ENCODE measurements at regions of chr11 and their contacts with region 1.

Region 1: GRCh38 chr11:88016392-88017170 is 158.7 kb downstream of the RAB38 start:
- DNase-seq: peak; percentile 80
- ATAC-seq: peak; percentile 70
- H3K4me3 Mint-ChIP-seq: no peak overlapping the region
- H3K27ac Mint-ChIP-seq: no peak overlapping the region
- H3K4me1 Mint-ChIP-seq: no peaks in the 10 kb centered on the region
- H3K27me3 Mint-ChIP-seq: no peaks in the 10 kb centered on the region
- CTCF ChIP-seq: peak; percentile 67

Region 2: GRCh38 chr11:87966694-87967093 is 49.9 kb before region 1 on chr11:
- CTCF ChIA-PET with region 1: interaction called, 12 read pairs
- POLR2A ChIA-PET with region 1: no interaction called
- intact Hi-C with region 1: no loop called
- DNase-seq: no peak
- ATAC-seq: no peak
- H3K4me3 Mint-ChIP-seq: no peak overlapping the region
- H3K27ac Mint-ChIP-seq: no peak overlapping the region
- H3K4me1 Mint-ChIP-seq: no peaks in the 10 kb centered on the region
- H3K27me3 Mint-ChIP-seq: peaks cover 2% of the 10 kb centered on the region
- CTCF ChIP-seq: no peak

Region 3: DNA sequence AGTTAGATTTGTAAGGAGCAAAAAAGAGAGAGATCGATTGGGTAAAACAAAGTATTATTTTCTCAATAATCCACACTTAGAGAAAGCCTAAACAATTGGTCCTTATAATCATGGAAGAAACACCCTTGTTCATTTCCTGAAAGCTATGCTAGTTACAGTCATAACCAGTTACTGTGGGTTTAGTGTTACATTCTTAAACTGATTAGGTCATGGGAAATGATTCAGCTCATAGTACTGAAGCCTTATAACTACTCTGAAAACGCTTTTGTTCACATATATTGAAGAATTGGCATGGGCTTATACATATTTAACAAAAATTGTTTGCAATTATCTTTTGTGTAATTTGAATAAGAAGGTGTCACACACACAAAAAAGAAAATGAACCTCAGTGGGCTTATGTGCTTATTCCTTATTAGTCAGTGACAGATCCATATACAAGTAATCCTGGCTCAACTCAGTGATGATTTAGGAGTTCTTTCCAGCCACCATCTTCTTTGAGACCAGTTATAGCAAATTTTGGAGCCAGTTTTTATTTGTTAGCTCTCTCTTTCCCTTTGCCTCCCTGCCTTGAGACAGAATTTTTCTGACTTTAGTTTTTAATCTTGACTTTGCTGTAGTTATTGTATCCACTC is 519.5 kb after region 1 on chr11:
- CTCF ChIA-PET with region 1: interaction called, 55 read pairs
- POLR2A ChIA-PET with region 1: no interaction called
- intact Hi-C with region 1: no loop called
- DNase-seq: no peak
- ATAC-seq: peak; percentile 96
- H3K4me3 Mint-ChIP-seq: no peak overlapping the region
- H3K27ac Mint-ChIP-seq: no peak overlapping the region
- H3K4me1 Mint-ChIP-seq: peaks cover 4% of the 10 kb centered on the region
- H3K27me3 Mint-ChIP-seq: peaks cover 3% of the 10 kb centered on the region
- CTCF ChIP-seq: no peak

Region 4: DNA sequence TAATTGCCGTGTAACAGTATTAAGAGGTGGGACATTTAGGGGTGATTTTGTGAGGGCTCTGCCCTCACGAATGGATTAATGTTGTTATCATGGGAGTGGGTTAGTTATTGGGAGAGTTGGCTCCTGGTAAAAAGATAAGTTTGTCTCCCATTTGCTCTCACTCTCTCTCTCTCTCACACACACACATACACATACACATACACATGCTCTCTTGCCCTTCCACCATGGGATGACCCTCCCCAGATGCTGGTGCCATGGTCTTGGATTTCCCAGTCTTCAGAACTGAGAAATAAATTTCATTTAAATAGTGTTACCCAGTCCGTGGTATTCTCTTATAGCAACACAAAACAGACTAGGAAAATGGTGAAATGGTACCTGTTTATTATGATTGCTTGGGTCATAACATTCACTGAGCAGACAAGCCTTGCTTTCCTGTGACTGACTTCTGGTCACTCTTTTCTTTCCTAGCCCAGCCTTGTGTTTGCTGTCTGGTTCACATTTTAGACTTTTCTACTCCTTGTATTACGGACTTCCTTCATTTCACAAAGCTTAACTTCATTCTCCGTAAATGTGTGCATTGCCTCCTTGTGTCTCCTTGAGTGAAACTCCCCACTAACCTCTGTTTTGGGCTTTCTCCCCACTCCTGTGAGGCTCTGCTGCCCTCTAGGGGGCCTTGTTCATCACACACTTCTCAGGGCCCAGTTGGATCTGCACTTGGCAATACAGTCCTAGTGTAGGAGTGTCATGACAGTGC is 527.5 kb after region 1 on chr11:
- CTCF ChIA-PET with region 1: interaction called, 84 read pairs
- POLR2A ChIA-PET with region 1: no interaction called
- intact Hi-C with region 1: no loop called
- DNase-seq: peak; percentile 85
- ATAC-seq: peak; percentile 98
- H3K4me3 Mint-ChIP-seq: no peak overlapping the region
- H3K27ac Mint-ChIP-seq: no peak overlapping the region
- H3K4me1 Mint-ChIP-seq: peaks cover 4% of the 10 kb centered on the region
- H3K27me3 Mint-ChIP-seq: no peaks in the 10 kb centered on the region
- CTCF ChIP-seq: peak; percentile 95

Region 5: GRCh38 chr11:88552377-88553062 is 535.9 kb after region 1 on chr11:
- CTCF ChIA-PET with region 1: interaction called, 84 read pairs
- POLR2A ChIA-PET with region 1: no interaction called
- intact Hi-C with region 1: no loop called
- DNase-seq: peak; percentile 72
- ATAC-seq: peak; percentile 86
- H3K4me3 Mint-ChIP-seq: no peak overlapping the region
- H3K27ac Mint-ChIP-seq: no peak overlapping the region
- H3K4me1 Mint-ChIP-seq: peaks cover 5% of the 10 kb centered on the region
- H3K27me3 Mint-ChIP-seq: no peaks in the 10 kb centered on the region
- CTCF ChIP-seq: peak; percentile 65